A549 (cell line): ENCODE measurements at regions of chr6 and their contacts with region 1.

Region 1: GRCh38 chr6:17994019-17994418 is 6.6 kb upstream of the KIF13A start:
- DNase-seq: no peak
- ATAC-seq: no peak
- H3K4me3 ChIP-seq: no peak overlapping the region
- H3K27ac ChIP-seq: peak overlapping the region in 1 of 2 experiments; percentile 68; a peak in 3 of 6 replicates
- H3K4me1 ChIP-seq: peaks cover 12% of the 10 kb centered on the region; the same call in 1 of the 3 replicates
- CTCF ChIP-seq: no peak
- EP300 ChIP-seq: no peak
- POLR2A ChIP-seq: no peak
- RAD21 ChIP-seq: no peak

Region 2: DNA sequence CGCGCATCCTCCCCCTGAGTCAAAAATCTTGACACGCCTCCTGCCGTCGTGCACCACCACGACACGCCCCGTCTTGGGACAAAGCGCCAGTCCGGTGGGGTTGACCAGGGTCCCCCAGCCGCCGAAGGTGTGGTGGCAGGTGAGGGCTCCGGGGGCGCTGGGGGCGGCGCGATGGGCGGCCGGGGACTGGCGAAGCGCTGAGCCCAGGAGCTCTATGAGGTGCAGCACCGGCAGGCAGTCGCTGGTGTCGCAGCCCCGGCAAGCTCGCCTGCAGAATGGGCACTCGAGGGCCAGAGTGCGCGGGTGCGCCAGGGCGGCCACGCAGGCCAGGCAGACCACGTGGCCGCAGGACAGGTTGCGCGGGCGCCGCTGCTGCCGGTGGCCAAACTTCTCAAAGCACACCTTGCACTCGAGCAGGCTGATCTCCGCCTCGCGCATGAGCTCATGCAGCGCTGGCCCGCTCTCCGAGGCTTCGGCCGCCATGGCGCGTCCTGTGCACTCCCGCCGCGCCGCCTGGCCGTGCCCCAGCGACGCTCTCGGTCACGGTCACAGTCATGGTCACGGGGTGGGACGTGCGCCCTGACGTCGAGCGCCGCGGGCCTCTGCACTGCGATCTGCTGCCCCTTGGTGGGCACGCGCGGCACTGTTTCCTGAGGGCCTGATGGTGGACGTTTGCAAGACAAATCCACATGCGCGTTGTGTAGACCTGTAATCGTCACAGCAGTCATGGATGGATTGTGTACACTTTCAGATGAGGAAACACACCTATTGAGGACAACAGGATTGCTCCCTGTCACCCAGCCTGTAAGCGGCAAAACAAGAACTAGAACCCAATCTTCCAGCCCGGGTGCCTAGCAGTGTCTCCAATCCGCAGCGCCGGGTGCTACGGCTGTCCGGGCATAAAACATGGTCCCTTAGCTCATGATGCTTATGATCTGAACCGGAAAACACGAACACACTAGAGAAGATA is 128.4 kb after region 1 on chr6 and contains the start of gene NHLRC1:
- CTCF ChIA-PET with region 1: interaction called, 21 read pairs
- POLR2A ChIA-PET with region 1: interaction called, 4 read pairs
- DNase-seq: peak; percentile 58 to 93
- ATAC-seq: peak; percentile 98
- H3K4me3 ChIP-seq: peak within 1 kb of the TSS; percentile 39
- H3K27ac ChIP-seq: peak within 1 kb of the TSS; percentile 76 to 94
- H3K4me1 ChIP-seq: 0 out of 3 replicates have a peak, but pooled peaks cover 3% of the 10 kb centered on the region
- CTCF ChIP-seq: peak; percentile 74
- EP300 ChIP-seq: no peak
- POLR2A ChIP-seq: peak; percentile 64
- RAD21 ChIP-seq: peak; percentile 90 to 94
- polyA plus RNA-seq, gene NHLRC1: 1.7 and 2.0 TPM in 2 replicates